ENCODE measurements at regions of chr16 and their contacts with region 1.

Region 1: GRCh38 chr16:51762081-51762996 is 611.3 kb upstream of the SALL1 start:
- DNase-seq: no peak
- ATAC-seq: peak; percentile 99
- H3K4me3 ChIP-seq: no peak overlapping the region
- H3K27ac ChIP-seq: no peak overlapping the region
- H3K4me1 ChIP-seq: no peaks in the 10 kb centered on the region
- H3K27me3 ChIP-seq: 0 out of 4 replicates have a peak, but pooled peaks cover 0 to 2% of the 10 kb centered on the region in 2 experiments
- CTCF ChIP-seq: peak; percentile 81 to 92 (median 82)
- EP300 ChIP-seq: no peak
- POLR2A ChIP-seq: no peak
- RAD21 ChIP-seq: peak; percentile 62

Region 2: GRCh38 chr16:51146256-51146924 is 615.9 kb before region 1 on chr16:
- CTCF ChIA-PET with region 1: interaction called, 7 read pairs
- POLR2A ChIA-PET with region 1: no interaction called
- RAD21 ChIA-PET with region 1: no interaction called
- SMC1A ChIA-PET with region 1: interaction called, 4 read pairs
- in situ Hi-C with region 1: no loop called
- intact Hi-C with region 1: loop called (anchors 1 kb)
- DNase-seq: no peak
- ATAC-seq: no peak
- H3K4me3 ChIP-seq: no peak overlapping the region
- H3K27ac ChIP-seq: no peak overlapping the region
- H3K4me1 ChIP-seq: no peaks in the 10 kb centered on the region
- H3K27me3 ChIP-seq: peaks cover 0 to 8% of the 10 kb centered on the region in 2 experiments; a peak in 3 of 4 replicates
- CTCF ChIP-seq: no peak; a peak in 1 of 6 replicates
- EP300 ChIP-seq: no peak
- POLR2A ChIP-seq: no peak
- RAD21 ChIP-seq: no peak

Measured in GM12878 (cell line).